PC-3 (cell line): ENCODE measurements at regions of chr19 and their contacts with region 1.

Region 1: DNA sequence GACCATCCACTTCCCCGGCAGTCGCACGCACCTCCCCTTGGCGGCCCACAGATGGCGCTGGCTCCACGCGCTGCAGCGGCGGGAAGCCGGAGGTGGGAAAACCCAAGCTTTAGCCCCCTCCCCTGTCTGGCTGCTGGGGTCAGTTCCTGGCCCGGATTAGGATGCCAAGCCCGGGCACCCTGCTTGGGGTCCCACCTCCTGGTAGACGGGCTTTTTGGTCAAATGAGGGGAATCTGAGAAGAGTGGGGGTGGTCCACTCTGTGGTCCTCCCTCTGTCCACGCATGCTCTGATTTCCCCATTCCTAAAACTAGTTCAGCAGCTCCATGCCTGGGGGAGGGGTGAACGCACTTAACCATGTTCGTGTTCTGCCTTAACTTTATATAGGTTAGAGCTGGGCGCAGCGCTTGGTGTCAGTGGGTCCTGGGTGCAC is 8.1 kb upstream of the ADGRE2 start:
- DNase-seq: peak; percentile 42
- ATAC-seq: no peak
- H3K4me3 ChIP-seq: peak overlapping the region; percentile 35
- H3K27ac ChIP-seq: no peak overlapping the region
- H3K4me1 ChIP-seq: peaks cover 12% of the 10 kb centered on the region
- H3K27me3 ChIP-seq: peaks cover 3% of the 10 kb centered on the region; the same call in 1 of the 2 replicates
- CTCF ChIP-seq: peak; percentile 95

Region 2: GRCh38 chr19:14848822-14849221 is 62.4 kb after region 1 on chr19 and contains the start of gene OR7A10:
- CTCF ChIA-PET with region 1: no interaction called
- POLR2A ChIA-PET with region 1: no interaction called
- intact Hi-C with region 1: no loop called
- DNase-seq: no peak
- ATAC-seq: no peak
- H3K4me3 ChIP-seq: no peak within 1 kb of the TSS
- H3K27ac ChIP-seq: no peak within 1 kb of the TSS
- H3K4me1 ChIP-seq: no peaks in the 10 kb centered on the region
- H3K27me3 ChIP-seq: peaks cover 75% of the 10 kb centered on the region
- CTCF ChIP-seq: no peak
- total RNA-seq, gene OR7A10: not detected in 2 replicates

Region 3: DNA sequence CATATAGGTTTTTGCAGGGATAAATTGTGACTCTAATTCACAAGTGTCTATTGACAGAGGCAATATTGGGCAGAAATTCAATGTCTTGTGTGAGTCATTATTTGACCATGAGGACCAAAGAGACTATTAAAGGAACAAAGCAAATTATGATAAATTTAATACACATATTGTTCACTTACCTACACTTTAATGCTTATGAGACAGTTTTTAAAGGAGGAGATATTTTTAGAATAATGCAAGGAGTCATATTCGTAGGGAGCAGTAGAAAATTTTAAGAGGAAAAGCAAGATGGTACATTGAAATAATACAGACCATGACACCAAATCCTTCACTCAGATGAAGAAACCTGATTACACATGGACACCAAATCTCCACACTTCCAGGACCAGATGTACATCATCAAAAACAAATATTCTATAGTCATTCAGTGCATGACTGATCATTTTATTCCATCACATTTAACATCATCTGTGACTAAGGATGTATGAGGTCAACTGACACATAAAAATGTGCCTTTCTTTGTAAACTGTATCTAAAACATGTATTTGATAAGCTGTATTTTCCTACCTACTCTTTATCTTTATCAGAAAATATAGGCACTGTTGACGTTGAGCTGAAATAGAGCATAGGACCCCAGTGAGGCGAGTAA is 103.7 kb after region 1 on chr19:
- CTCF ChIA-PET with region 1: no interaction called
- POLR2A ChIA-PET with region 1: no interaction called
- intact Hi-C with region 1: loop called (anchors 2 kb)
- DNase-seq: peak; percentile 62
- ATAC-seq: peak; percentile 39
- H3K4me3 ChIP-seq: no peak overlapping the region
- H3K27ac ChIP-seq: peak overlapping the region; percentile 21; the same call in 1 of the 2 replicates
- H3K4me1 ChIP-seq: peaks cover 17% of the 10 kb centered on the region
- H3K27me3 ChIP-seq: peaks cover 22% of the 10 kb centered on the region
- CTCF ChIP-seq: no peak